ENCODE measurements at regions of chr3 and their contacts with region 1.

Region 1: DNA sequence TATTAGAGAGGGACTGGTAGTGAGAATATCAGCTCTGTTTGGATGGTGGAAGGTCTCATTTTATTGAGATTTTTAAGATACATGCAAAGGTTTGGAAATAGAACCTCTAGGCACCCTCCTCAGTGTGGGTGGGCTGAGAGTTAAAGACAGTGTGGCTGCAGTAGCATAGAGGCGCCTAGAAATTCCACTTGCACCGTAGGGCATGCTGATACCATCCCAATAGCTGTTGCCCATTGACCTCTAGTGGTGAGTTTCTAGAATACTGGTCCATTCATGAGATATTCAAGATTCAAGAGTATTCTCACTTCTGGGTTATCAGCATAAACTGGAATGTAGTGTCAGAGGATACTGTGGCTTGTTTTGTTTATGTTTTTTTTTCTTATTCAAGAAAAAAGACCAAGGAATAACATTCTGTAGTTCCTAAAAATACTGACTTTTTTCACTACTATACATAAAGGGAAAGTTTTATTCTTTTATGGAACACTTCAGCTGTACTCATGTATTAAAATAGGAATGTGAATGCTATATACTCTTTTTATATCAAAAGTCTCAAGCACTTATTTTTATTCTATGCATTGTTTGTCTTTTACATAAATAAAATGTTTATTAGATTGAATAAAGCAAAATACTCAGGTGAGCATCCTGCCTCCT is 87.2 kb downstream of the TGFBR2 start:
- H3K4me3 Mint-ChIP-seq: no peak overlapping the region
- H3K27ac Mint-ChIP-seq: no peak overlapping the region
- H3K4me1 Mint-ChIP-seq: peaks cover 19% of the 10 kb centered on the region
- H3K27me3 Mint-ChIP-seq: no peaks in the 10 kb centered on the region

Region 2: GRCh38 chr3:30012941-30013543 is 680.6 kb before region 1 on chr3:
- intact Hi-C with region 1: loop called (anchors 2 kb)
- H3K4me3 Mint-ChIP-seq: no peak overlapping the region
- H3K27ac Mint-ChIP-seq: no peak overlapping the region
- H3K4me1 Mint-ChIP-seq: no peaks in the 10 kb centered on the region
- H3K27me3 Mint-ChIP-seq: no peaks in the 10 kb centered on the region

Region 3: DNA sequence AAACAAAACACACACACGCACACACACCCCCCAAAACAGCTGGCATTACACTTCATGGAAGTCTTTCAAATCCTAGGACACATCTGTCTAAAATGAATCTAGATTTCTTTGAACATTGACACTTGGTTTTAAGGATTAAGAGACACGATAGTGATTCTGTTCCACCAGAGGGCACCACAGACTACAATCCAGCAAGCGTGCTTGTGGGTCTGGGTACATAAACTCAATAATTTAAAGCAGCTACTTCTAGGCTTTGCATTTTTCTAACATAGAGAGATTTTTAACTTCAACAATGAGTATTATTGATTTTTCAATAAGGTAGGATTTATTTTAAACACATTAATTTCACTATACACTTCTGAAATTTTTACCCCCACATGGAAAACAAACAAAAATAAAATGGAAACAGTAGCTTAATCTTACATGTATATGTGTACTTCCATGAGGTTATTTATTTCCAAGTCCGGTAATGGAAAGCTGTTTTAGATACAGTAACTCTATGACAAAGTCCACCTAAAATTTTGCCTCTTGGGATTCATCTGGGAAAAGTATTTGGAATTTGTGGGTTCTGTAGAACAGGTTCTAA is 651.2 kb before region 1 on chr3:
- intact Hi-C with region 1: loop called (anchors 1 kb)
- H3K4me3 Mint-ChIP-seq: no peak overlapping the region
- H3K27ac Mint-ChIP-seq: no peak overlapping the region
- H3K4me1 Mint-ChIP-seq: peaks cover 31% of the 10 kb centered on the region
- H3K27me3 Mint-ChIP-seq: no peaks in the 10 kb centered on the region

Region 4: GRCh38 chr3:30112902-30113484 is 580.6 kb before region 1 on chr3:
- intact Hi-C with region 1: loop called (anchors 2 kb)
- H3K4me3 Mint-ChIP-seq: no peak overlapping the region
- H3K27ac Mint-ChIP-seq: no peak overlapping the region
- H3K4me1 Mint-ChIP-seq: peaks cover 9% of the 10 kb centered on the region
- H3K27me3 Mint-ChIP-seq: peaks cover 5% of the 10 kb centered on the region

Region 5: GRCh38 chr3:30206051-30206450 is 487.5 kb before region 1 on chr3:
- intact Hi-C with region 1: loop called (anchors 5 kb)
- H3K4me3 Mint-ChIP-seq: no peak overlapping the region
- H3K27ac Mint-ChIP-seq: no peak overlapping the region
- H3K4me1 Mint-ChIP-seq: peaks cover 5% of the 10 kb centered on the region
- H3K27me3 Mint-ChIP-seq: no peaks in the 10 kb centered on the region

Region 6: GRCh38 chr3:30611613-30612436 is 81.8 kb before region 1 on chr3:
- intact Hi-C with region 1: loop called (anchors 2 kb)
- H3K4me3 Mint-ChIP-seq: peak overlapping the region; percentile 48
- H3K27ac Mint-ChIP-seq: peak overlapping the region; percentile 40
- H3K4me1 Mint-ChIP-seq: peaks cover 75% of the 10 kb centered on the region
- H3K27me3 Mint-ChIP-seq: no peaks in the 10 kb centered on the region

Measured in dendritic cell treated with granulocyte-macrophage colony-stimulating factor and Interleukin-4, amounts not matched to agents 40 ng/mL and 50 ng/mL, for 4 days (primary cell).